Breast epithelium (tissue), 4 donors: ENCODE measurements at regions of chr7 and their contacts with region 1.

Region 1: GRCh38 chr7:69906283-69906995 is 308.2 kb downstream of the AUTS2 start:
- DNase-seq: no peak
- H3K4me3 ChIP-seq: no peak overlapping the region
- H3K27ac ChIP-seq: no peak overlapping the region
- H3K4me1 ChIP-seq: no peaks in the 10 kb centered on the region
- H3K27me3 ChIP-seq: no peaks in the 10 kb centered on the region
- CTCF ChIP-seq: no peak
- POLR2A ChIP-seq: no peak

Region 2: DNA sequence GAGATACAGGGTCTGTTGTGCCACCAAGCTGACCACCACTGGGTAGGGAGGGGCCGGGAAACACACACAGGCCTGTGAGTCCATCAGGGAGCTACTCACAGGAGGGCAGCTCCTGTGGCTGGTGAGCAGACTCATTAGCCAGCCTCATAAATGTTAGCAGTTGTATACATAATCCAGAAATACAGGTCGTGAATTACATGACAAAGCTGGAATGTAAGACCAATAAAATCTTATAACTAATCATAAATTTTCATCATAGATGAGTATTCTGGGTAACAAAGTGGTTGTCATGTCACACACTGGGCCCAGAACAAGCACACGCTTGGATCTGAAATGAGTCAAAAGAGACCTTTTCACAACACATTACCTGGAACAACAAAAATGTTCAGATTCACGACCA is 950.8 kb before region 1 on chr7:
- intact Hi-C with region 1: no loop called
- DNase-seq: no peak
- H3K4me3 ChIP-seq: no peak overlapping the region
- H3K27ac ChIP-seq: no peak overlapping the region
- H3K4me1 ChIP-seq: no peaks in the 10 kb centered on the region
- H3K27me3 ChIP-seq: no peaks in the 10 kb centered on the region
- CTCF ChIP-seq: no peak
- POLR2A ChIP-seq: no peak

Region 3: DNA sequence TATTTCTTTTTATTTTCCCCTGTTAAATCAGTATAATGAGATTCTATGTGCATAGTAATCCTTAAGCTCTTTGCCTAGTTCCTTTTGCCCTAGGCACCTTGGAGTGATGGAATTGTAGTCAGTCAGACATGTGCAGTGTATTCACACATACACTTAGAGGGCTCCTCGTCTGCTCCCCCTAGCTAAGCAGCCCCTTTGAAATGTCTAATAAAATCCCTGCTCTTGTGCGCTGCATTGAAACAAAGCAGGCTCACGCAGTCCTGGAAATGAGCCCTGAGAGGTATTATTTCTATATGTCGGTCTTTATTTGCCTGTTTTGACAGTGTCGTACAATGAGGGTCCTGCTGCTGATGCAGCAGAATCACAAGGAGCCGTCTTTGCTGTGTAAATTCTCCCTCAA is 49.4 kb before region 1 on chr7:
- intact Hi-C with region 1: loop called (anchors 2 kb)
- DNase-seq: no peak
- H3K4me3 ChIP-seq: no peak overlapping the region
- H3K27ac ChIP-seq: no peak overlapping the region
- H3K4me1 ChIP-seq: no peaks in the 10 kb centered on the region
- H3K27me3 ChIP-seq: no peaks in the 10 kb centered on the region
- CTCF ChIP-seq: no peak
- POLR2A ChIP-seq: no peak

Region 4: DNA sequence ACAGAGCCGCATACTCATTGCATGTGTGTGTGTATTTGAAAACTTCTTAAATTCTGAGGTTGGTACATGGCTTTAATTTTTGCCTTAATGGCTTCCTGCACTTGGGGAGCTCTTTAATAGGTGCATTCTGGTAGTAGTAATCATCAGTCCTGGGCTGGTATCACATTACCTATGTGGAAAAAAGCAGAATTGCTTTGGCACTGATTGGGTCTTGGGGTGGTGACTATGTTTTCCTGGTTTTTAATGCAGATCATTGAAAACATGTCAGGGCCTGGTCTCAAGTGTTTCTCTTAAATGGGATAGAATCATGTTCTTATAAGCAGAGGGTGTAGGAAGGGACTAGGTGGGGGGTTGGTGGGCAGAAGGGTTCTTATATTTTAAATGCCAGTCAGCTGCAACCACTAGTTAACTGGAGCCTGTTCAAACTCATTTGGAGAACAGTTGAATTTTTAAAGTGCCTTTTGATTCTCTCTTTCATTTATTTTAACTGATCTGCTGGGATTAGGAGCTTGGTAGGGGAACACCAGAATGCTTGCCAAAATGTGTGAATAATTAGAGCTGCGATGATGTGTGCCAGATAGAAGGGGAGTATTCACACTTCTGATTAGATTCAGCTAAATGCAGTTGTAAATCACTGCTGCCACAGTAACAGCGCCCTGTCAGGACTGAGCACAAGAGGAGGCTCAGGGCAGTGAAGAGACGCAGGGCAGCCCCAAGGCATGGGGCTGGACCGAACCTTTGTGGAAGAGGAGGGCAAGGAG is 592.0 kb after region 1 on chr7:
- intact Hi-C with region 1: loop called (anchors 5 kb)
- DNase-seq: no peak
- H3K4me3 ChIP-seq: no peak overlapping the region
- H3K27ac ChIP-seq: no peak overlapping the region
- H3K4me1 ChIP-seq: no peaks in the 10 kb centered on the region
- H3K27me3 ChIP-seq: no peaks in the 10 kb centered on the region
- CTCF ChIP-seq: no peak
- POLR2A ChIP-seq: no peak